ENCODE measurements at regions of chr16 and their contacts with region 1.

Region 1: GRCh38 chr16:57045694-57046381 is 46.5 kb upstream of the CPNE2 start:
- DNase-seq: peak; percentile 75
- H3K4me3 ChIP-seq: no peak overlapping the region
- H3K27ac ChIP-seq: no peak overlapping the region
- H3K4me1 ChIP-seq: no peaks in the 10 kb centered on the region
- H3K27me3 ChIP-seq: no peaks in the 10 kb centered on the region
- CTCF ChIP-seq: peak; percentile 72 to 80
- POLR2A ChIP-seq: no peak

Region 2: DNA sequence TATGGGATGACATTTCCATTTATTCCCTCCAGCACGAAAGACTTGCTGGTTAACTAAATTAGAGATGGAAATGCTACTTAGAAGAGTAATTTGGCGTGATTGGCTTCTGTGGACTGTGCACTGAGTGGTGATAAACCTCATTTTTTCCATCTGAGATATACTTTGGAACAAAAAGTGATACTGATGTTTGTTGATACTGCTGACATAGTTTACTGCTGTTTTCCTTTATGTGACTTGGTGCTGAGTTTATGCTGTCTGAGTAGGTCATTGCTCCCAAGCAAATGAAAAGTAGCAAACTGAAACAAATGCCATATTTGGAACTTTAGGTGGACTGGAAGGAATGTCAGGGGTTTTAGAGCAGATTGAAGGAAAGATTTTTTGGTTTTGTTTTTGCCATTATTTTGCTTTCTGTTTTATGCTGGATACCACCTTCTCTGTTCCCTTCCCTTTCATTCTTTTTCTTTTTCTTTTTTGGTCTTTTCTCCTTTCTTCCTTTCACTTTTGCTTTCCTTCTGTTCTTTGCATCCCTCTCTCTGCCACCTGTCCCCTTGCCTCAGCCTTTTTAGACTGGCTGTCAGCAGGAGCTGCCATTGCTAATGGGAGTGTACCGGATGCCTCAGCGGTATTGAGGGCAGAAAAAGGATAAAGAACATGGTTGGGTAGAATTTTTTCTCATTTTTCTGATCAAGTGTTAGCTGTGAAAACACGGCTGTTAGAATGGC is 274.1 kb before region 1 on chr16:
- CTCF ChIA-PET with region 1: no interaction called
- POLR2A ChIA-PET with region 1: no interaction called
- dilution Hi-C with region 1: no loop called
- intact Hi-C with region 1: no loop called
- DNase-seq: no peak
- H3K4me3 ChIP-seq: no peak overlapping the region
- H3K27ac ChIP-seq: no peak overlapping the region
- H3K4me1 ChIP-seq: no peaks in the 10 kb centered on the region
- H3K27me3 ChIP-seq: no peaks in the 10 kb centered on the region
- CTCF ChIP-seq: no peak
- POLR2A ChIP-seq: no peak

Region 3: DNA sequence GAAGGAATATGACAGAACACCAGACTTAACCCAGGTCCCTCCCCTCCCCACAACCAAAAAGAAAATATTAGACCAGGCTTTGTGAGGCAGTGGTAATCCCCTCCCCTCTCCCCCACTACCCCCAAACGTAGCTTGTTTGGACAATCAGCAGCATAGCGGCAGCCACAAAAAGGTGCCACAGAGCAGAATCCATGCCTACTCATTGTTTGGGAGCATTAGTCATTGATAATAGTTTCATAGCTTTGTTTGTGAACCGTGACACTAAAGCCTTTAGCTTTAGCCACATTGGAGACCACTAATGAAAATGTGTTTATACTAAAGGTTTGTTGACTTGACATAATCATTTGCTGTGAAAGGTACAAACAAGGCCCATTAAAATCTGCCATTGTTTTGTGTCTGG is 250.8 kb before region 1 on chr16:
- CTCF ChIA-PET with region 1: interaction called, 10 read pairs
- POLR2A ChIA-PET with region 1: no interaction called
- dilution Hi-C with region 1: no loop called
- intact Hi-C with region 1: loop called (anchors 1 kb)
- DNase-seq: peak; percentile 30
- H3K4me3 ChIP-seq: no peak overlapping the region
- H3K27ac ChIP-seq: peak overlapping the region; percentile 36
- H3K4me1 ChIP-seq: peaks cover 4% of the 10 kb centered on the region
- H3K27me3 ChIP-seq: no peaks in the 10 kb centered on the region
- CTCF ChIP-seq: no peak
- POLR2A ChIP-seq: no peak

Region 4: DNA sequence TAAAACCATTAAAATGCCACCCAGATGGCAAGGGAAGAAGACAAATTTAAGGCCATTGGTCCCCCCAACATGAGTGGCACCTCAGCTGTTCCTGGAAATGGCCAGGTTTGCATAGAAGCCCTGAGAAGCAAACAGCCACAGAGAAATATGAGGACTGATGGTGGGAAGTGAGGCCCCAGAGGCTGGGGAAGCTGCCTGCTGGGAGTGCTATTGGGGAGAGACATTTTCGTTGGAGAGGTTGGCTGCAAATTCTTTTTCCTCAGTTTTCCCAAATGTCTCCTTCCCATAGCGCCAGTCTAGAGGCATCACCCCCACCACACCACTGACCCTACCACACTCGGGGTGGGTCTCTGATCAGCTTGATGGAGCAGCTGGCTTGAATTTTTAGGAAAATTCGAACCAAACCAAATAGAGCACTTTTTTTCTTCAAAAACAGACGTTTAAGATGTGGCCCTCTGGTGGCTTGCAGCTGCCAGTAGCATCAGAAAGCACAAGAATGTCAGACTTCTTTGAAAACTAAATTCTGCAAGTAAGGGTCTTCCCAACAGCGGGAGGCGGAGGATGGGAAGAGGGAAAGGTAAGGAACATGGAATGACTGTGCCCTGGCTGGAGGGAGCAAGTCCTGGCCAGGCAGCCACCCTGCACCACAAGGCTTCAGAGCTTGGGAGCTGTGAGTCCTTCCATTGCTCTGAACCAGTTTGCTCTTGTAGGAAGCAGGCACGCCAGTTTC is 194.0 kb before region 1 on chr16:
- CTCF ChIA-PET with region 1: no interaction called
- POLR2A ChIA-PET with region 1: no interaction called
- dilution Hi-C with region 1: no loop called
- intact Hi-C with region 1: no loop called
- DNase-seq: peak; percentile 22
- H3K4me3 ChIP-seq: no peak overlapping the region
- H3K27ac ChIP-seq: no peak overlapping the region
- H3K4me1 ChIP-seq: peaks cover 32% of the 10 kb centered on the region
- H3K27me3 ChIP-seq: no peaks in the 10 kb centered on the region
- CTCF ChIP-seq: peak; percentile 34 to 44
- POLR2A ChIP-seq: no peak

Region 5: GRCh38 chr16:56950881-56951771 is 94.7 kb before region 1 on chr16:
- CTCF ChIA-PET with region 1: interaction called, 13 read pairs
- POLR2A ChIA-PET with region 1: no interaction called
- dilution Hi-C with region 1: no loop called
- intact Hi-C with region 1: no loop called
- DNase-seq: peak; percentile 59
- H3K4me3 ChIP-seq: no peak overlapping the region
- H3K27ac ChIP-seq: no peak overlapping the region
- H3K4me1 ChIP-seq: no peaks in the 10 kb centered on the region
- H3K27me3 ChIP-seq: no peaks in the 10 kb centered on the region
- CTCF ChIP-seq: peak; percentile 63 to 76
- POLR2A ChIP-seq: no peak

Region 6: GRCh38 chr16:56964243-56965148 is 81.3 kb before region 1 on chr16:
- CTCF ChIA-PET with region 1: interaction called, 140 read pairs
- POLR2A ChIA-PET with region 1: no interaction called
- dilution Hi-C with region 1: no loop called
- intact Hi-C with region 1: loop called (anchors 1 kb)
- DNase-seq: peak; percentile 74
- H3K4me3 ChIP-seq: no peak overlapping the region
- H3K27ac ChIP-seq: no peak overlapping the region
- H3K4me1 ChIP-seq: peaks cover 18% of the 10 kb centered on the region
- H3K27me3 ChIP-seq: no peaks in the 10 kb centered on the region
- CTCF ChIP-seq: peak; percentile 96 to 99
- POLR2A ChIP-seq: no peak

Region 7: DNA sequence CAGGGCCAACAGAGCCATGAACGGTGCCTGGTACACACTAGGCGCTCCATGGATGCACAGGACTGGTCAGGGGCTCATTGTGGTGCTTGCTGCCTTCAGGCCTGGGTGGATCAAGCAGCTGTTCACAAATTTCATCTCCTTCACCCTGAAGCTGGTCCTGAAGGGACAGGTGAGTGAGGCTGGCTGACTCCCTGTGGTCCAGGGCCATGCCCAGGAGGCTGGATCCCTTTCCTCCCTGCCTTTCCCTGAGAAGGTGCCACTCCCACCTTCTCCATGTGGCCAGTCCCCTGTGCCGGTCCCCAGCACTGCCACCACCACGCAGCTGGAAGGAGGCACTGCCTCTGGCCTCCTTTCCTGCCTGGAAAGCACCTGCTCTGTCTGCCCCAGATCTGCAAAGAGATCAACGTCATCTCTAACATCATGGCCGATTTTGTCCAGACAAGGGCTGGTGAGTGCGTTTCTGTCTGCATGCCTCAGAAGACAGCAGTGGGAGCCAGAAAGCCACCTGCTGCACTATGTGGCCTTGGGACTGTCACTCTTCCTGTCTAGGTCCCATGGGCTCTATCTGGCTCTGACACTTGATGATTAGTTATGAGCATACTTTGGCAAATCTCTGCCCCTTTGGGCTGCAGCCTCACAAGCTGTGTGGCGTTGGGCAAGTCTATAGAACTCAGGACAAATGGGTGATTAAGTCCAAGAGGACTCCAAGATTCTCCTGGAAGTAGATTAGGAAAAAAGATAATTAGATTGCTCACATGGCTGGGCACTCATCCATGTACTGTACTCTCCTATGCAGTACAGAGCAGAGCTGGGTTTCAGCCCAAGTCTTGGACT is 74.7 kb before region 1 on chr16:
- CTCF ChIA-PET with region 1: interaction called, 140 read pairs
- POLR2A ChIA-PET with region 1: no interaction called
- dilution Hi-C with region 1: no loop called
- intact Hi-C with region 1: no loop called
- DNase-seq: no peak
- H3K4me3 ChIP-seq: no peak overlapping the region
- H3K27ac ChIP-seq: no peak overlapping the region
- H3K4me1 ChIP-seq: no peaks in the 10 kb centered on the region
- H3K27me3 ChIP-seq: no peaks in the 10 kb centered on the region
- CTCF ChIP-seq: no peak
- POLR2A ChIP-seq: no peak

Region 8: GRCh38 chr16:56988948-56989945 is 56.6 kb before region 1 on chr16 and contains the start of gene NLRC5:
- CTCF ChIA-PET with region 1: interaction called, 24 read pairs
- POLR2A ChIA-PET with region 1: interaction called, 3 read pairs
- dilution Hi-C with region 1: no loop called
- intact Hi-C with region 1: no loop called
- DNase-seq: peak; percentile 82
- H3K4me3 ChIP-seq: peak within 1 kb of the TSS; percentile 80 to 96 (median 86)
- H3K27ac ChIP-seq: peak within 1 kb of the TSS; percentile 58
- H3K4me1 ChIP-seq: peaks cover 17% of the 10 kb centered on the region
- H3K27me3 ChIP-seq: no peaks in the 10 kb centered on the region
- CTCF ChIP-seq: no peak
- POLR2A ChIP-seq: peak; percentile 44
- total RNA-seq, gene NLRC5: 20.1 and 26.3 TPM in 2 replicates

Region 9: GRCh38 chr16:57032931-57033330 is 12.9 kb before region 1 on chr16:
- CTCF ChIA-PET with region 1: interaction called, 13 read pairs
- POLR2A ChIA-PET with region 1: interaction called, 4 read pairs
- dilution Hi-C with region 1: no loop called
- intact Hi-C with region 1: no loop called
- DNase-seq: no peak
- H3K4me3 ChIP-seq: no peak overlapping the region
- H3K27ac ChIP-seq: no peak overlapping the region
- H3K4me1 ChIP-seq: no peaks in the 10 kb centered on the region
- H3K27me3 ChIP-seq: no peaks in the 10 kb centered on the region
- CTCF ChIP-seq: no peak
- POLR2A ChIP-seq: no peak

Measured in endothelial cell of umbilical vein (primary cell).